Transverse colon (tissue), 4 donors: ENCODE measurements at regions of chr9 and their contacts with region 1.

Region 1: DNA sequence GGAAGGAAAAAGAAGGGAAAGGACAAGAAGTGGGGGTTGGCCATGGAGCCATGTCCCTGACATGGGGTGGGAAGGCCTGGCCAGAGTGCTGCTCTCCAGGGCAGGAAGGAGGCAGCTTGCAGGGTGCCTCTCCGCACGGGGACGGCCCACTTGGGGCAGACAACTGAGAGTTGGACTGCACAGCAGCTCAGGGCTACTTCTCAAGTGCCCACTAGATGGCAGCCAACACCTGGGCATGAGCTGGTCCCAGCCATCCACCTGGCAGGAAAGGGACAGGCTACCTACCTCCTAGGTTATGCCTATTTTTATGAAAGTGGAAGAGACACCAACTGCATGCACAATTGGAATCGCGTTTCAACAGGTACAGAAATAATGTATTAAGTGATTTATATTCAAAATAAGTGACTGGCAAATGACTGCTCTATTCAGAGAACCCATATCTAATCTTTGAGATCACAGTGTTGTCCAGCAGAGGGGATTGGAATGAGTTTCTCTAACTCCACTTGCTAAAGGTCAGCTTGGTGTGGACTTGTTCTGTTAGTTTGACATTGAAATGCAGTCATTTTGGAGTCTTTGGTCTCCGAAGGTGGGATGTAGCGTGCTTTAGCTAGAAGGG is 113.4 kb downstream of the SYK start:
- DNase-seq: peak; percentile 83
- H3K4me3 ChIP-seq: no peak overlapping the region
- H3K27ac ChIP-seq: peak overlapping the region in 1 of 4 donors; percentile 18
- H3K4me1 ChIP-seq: no peaks in the 10 kb centered on the region
- H3K27me3 ChIP-seq: no peaks in the 10 kb centered on the region
- CTCF ChIP-seq: peak; percentile 87 to 97 (median 89)
- EP300 ChIP-seq: no peak
- POLR2A ChIP-seq: no peak

Region 2: GRCh38 chr9:91036826-91037510 is 122.0 kb after region 1 on chr9:
- in situ Hi-C with region 1: no loop called
- intact Hi-C with region 1: loop called (anchors 10 kb)
- DNase-seq: peak; percentile 79
- H3K4me3 ChIP-seq: no peak overlapping the region
- H3K27ac ChIP-seq: peak overlapping the region; percentile 57 to 73 (median 65)
- H3K4me1 ChIP-seq: peaks cover 15 to 21% (median 20%) of the 10 kb centered on the region in 4 donors
- H3K27me3 ChIP-seq: no peaks in the 10 kb centered on the region
- CTCF ChIP-seq: peak; percentile 44 to 78 (median 46)
- EP300 ChIP-seq: no peak
- POLR2A ChIP-seq: no peak

Region 3: DNA sequence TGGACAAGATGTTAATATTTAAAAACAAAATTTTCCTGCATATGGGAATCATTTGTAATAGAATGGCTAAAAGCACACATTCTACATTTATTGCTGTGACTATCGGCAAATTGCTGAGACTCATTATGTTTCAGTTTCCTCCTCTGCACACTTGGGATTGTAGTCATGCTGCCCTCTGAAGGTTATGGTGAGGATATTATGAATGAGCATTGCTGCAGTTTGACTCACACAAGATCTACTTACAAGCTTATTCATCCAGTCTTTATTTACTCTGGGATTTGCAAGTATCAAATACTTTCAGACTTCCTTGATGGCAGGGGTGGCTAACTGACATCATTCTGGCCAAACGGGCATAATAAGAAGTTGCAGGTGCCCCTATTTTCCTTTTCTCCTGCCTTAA is 518.2 kb after region 1 on chr9:
- in situ Hi-C with region 1: loop called (anchors 5 to 25 kb)
- intact Hi-C with region 1: loop called (anchors 5 kb)
- DNase-seq: no peak
- H3K4me3 ChIP-seq: no peak overlapping the region
- H3K27ac ChIP-seq: no peak overlapping the region
- H3K4me1 ChIP-seq: peaks cover 3 to 8% (median 3%) of the 10 kb centered on the region in 4 donors
- H3K27me3 ChIP-seq: peaks cover 4% of the 10 kb centered on the region
- CTCF ChIP-seq: peak; percentile 49 to 56 (median 52)
- EP300 ChIP-seq: no peak
- POLR2A ChIP-seq: no peak

Region 4: GRCh38 chr9:91681461-91682305 is 766.7 kb after region 1 on chr9:
- in situ Hi-C with region 1: loop called in 2 of 4 experiments (anchors 10 to 25 kb)
- intact Hi-C with region 1: loop called (anchors 10 kb)
- DNase-seq: peak; percentile 78
- H3K4me3 ChIP-seq: no peak overlapping the region
- H3K27ac ChIP-seq: no peak overlapping the region
- H3K4me1 ChIP-seq: peaks cover 0 to 12% (median 0%) of the 10 kb centered on the region in 4 donors
- H3K27me3 ChIP-seq: peaks cover 4% of the 10 kb centered on the region
- CTCF ChIP-seq: peak; percentile 70 to 94 (median 90)
- EP300 ChIP-seq: no peak
- POLR2A ChIP-seq: no peak

Region 5: DNA sequence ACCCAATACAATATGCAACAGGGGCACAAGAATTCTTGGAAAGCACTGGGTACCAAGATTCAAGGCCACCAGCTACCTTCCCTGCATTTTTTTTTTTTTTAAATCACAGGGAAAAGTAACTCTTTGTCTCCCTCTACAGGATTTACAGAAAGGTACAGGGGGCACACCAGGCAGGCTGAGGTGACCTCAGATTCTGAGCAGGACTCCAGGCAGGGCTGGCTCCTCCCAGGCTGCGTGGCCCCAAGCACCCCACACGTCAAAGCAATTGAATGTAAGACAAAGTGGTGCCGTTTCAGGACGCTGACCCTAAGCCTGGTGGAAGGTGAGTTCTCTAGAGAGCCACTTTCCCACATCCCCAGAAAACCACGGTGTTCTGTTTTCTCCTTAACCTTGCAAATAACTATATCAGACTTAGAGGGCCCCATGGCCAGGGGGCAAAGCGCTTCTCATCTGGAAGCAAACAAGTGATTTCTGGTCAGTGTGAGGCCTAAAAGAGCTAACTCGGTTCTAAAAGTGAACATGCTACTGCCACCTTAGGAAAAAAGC is 812.4 kb after region 1 on chr9:
- in situ Hi-C with region 1: loop called in 1 of 4 experiments (anchors 10 kb)
- intact Hi-C with region 1: no loop called
- DNase-seq: no peak
- H3K4me3 ChIP-seq: no peak overlapping the region
- H3K27ac ChIP-seq: peak overlapping the region in 3 of 4 donors; percentile 0 to 18 (median 1)
- H3K4me1 ChIP-seq: peaks cover 0 to 3% (median 1%) of the 10 kb centered on the region in 4 donors
- H3K27me3 ChIP-seq: peaks cover under 1% of the 10 kb centered on the region
- CTCF ChIP-seq: peak; percentile 60 to 68 (median 64)
- EP300 ChIP-seq: no peak
- POLR2A ChIP-seq: no peak